Right cardiac atrium (tissue), 5 donors: ENCODE measurements at regions of chr7 and their contacts with region 1.

Region 1: GRCh38 chr7:88801046-88801445 is 5.5 kb upstream of the TEX47 start:
- DNase-seq: no peak
- ATAC-seq: no peak
- H3K4me3 ChIP-seq: no peak overlapping the region
- H3K27ac ChIP-seq: no peak overlapping the region
- H3K4me1 ChIP-seq: no peaks in the 10 kb centered on the region
- H3K27me3 ChIP-seq: no peaks in the 10 kb centered on the region

Region 2: DNA sequence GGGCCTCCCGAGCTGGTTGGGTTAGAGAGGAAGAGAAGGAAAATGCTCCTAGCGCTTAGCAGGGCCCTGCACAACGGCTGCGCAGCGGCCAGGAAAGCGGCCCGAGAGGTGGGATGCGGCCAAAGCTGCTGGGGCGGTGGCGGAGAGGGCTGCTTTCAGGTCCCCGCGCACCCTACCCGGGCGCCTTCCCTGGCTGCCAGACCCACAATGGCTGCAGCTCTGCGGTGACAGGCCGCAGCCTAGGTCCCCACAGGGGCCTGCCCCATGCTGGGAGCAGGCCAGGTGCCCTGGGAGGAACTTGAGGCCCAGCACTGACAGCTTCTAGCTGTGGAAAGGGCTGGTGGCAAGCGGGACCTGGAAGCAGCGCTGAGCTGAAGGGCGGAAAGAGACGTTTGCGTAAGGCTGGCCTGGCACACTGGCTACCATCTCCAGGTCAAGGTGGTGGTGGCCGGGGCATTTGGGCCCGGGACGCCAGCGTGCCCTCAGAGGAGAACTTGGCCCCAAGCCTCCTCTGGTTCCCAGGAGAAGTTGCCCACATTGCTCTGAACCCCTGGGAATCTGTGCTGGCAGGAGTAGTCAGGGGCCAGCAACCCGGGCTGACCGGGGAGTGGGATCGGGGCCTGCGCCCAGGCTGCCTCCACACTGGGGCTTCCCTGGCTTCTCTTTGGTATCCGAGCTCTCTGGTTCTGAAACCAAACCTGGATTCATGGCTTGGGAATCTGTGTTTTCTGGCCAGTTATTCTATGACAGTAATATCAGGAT is 114.4 kb before region 1 on chr7:
- intact Hi-C with region 1: no loop called
- DNase-seq: no peak
- ATAC-seq: no peak
- H3K4me3 ChIP-seq: no peak overlapping the region
- H3K27ac ChIP-seq: no peak overlapping the region
- H3K4me1 ChIP-seq: no peaks in the 10 kb centered on the region
- H3K27me3 ChIP-seq: no peaks in the 10 kb centered on the region

Region 3: GRCh38 chr7:88835147-88835728 is 34.2 kb after region 1 on chr7:
- intact Hi-C with region 1: loop called in 1 of 4 experiments (anchors 5 kb)
- DNase-seq: no peak
- ATAC-seq: no peak
- H3K4me3 ChIP-seq: no peak overlapping the region
- H3K27ac ChIP-seq: no peak overlapping the region
- H3K4me1 ChIP-seq: no peaks in the 10 kb centered on the region
- H3K27me3 ChIP-seq: no peaks in the 10 kb centered on the region

Region 4: GRCh38 chr7:88951826-88952225 is 150.8 kb after region 1 on chr7:
- intact Hi-C with region 1: no loop called
- DNase-seq: no peak
- ATAC-seq: no peak
- H3K4me3 ChIP-seq: no peak overlapping the region
- H3K27ac ChIP-seq: no peak overlapping the region
- H3K4me1 ChIP-seq: no peaks in the 10 kb centered on the region
- H3K27me3 ChIP-seq: no peaks in the 10 kb centered on the region